ENCODE measurements at regions of chr4 and their contacts with region 1.

Region 1: GRCh38 chr4:183471946-183472708 is 27.7 kb downstream of the CDKN2AIP start:
- DNase-seq: peak; percentile 50
- H3K4me3 ChIP-seq: no peak overlapping the region
- H3K27ac ChIP-seq: no peak overlapping the region
- H3K4me1 ChIP-seq: peaks cover 33% of the 10 kb centered on the region
- H3K27me3 ChIP-seq: no peaks in the 10 kb centered on the region
- CTCF ChIP-seq: peak; percentile 73 to 85

Region 2: DNA sequence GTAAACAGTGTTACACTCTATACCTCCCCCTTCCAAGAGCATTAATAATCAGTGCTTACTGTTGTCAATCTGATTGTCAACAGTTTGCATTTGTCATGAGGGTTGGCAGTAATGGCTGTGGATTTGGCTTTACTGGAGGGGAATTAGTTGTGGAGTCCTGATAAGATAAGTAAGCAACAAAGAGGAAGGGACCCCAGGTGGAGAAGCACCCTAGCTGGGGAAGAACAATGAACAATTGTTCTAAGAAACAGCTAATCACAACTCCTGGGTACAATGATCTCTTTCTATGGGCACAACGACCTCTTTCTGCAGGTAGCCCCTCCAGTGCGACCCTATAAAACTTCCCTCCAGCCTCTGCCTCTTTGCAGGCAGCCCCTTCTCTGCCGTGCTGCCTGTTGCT is 80.9 kb before region 1 on chr4:
- CTCF ChIA-PET with region 1: no interaction called
- dilution Hi-C with region 1: no loop called
- in situ Hi-C with region 1: no loop called
- intact Hi-C with region 1: no loop called
- DNase-seq: no peak
- H3K4me3 ChIP-seq: no peak overlapping the region
- H3K27ac ChIP-seq: no peak overlapping the region
- H3K4me1 ChIP-seq: no peaks in the 10 kb centered on the region
- H3K27me3 ChIP-seq: no peaks in the 10 kb centered on the region
- CTCF ChIP-seq: no peak

Region 3: DNA sequence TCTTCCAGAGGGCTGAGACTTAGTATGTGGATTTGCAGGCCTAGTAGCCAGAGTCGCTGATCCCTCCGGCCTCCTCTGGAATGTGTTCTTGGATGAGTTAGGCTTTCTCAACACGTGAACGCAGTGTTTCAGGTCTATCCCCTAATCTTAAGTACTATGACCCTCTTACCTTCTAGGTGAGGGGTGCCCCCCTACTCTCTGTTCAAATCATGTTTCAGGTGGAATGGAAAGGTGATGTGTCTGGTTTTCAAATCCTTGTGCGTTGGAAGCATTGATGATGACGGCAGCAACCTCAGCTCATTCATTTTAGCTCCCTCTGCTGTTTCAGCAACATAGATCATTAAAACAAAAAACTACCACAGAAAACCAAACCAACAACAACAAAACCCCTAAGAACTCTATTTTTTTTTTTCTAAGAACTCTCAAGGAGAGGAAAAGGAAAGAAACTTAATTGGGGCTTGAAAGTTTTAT is 130.5 kb after region 1 on chr4:
- CTCF ChIA-PET with region 1: interaction called, 4 read pairs
- dilution Hi-C with region 1: no loop called
- in situ Hi-C with region 1: loop called in 1 of 2 experiments (anchors 10 kb)
- intact Hi-C with region 1: loop called (anchors 1 kb)
- DNase-seq: peak; percentile 12
- H3K4me3 ChIP-seq: no peak overlapping the region
- H3K27ac ChIP-seq: no peak overlapping the region
- H3K4me1 ChIP-seq: no peaks in the 10 kb centered on the region
- H3K27me3 ChIP-seq: no peaks in the 10 kb centered on the region
- CTCF ChIP-seq: peak in 1 of 2 donors; percentile 46

Region 4: GRCh38 chr4:183659029-183659871 is 187.1 kb after region 1 on chr4 and contains the starts of genes RWDD4 and TRAPPC11:
- CTCF ChIA-PET with region 1: no interaction called
- dilution Hi-C with region 1: no loop called
- in situ Hi-C with region 1: no loop called
- intact Hi-C with region 1: loop called (anchors 1 kb)
- DNase-seq: peak; percentile 99
- H3K4me3 ChIP-seq: peak within 1 kb of the TSS; percentile 74 to 95 (median 81)
- H3K27ac ChIP-seq: peak within 1 kb of the TSS; percentile 80
- H3K4me1 ChIP-seq: peaks cover 6% of the 10 kb centered on the region
- H3K27me3 ChIP-seq: no peaks in the 10 kb centered on the region
- CTCF ChIP-seq: peak in 1 of 2 donors; percentile 28
- total RNA-seq, gene RWDD4: 23.3 to 24.0 TPM
- total RNA-seq, gene TRAPPC11: 33.3 to 42.3 TPM

Region 5: GRCh38 chr4:183840311-183840710 is 368.2 kb after region 1 on chr4:
- CTCF ChIA-PET with region 1: no interaction called
- dilution Hi-C with region 1: no loop called
- in situ Hi-C with region 1: no loop called
- intact Hi-C with region 1: loop called (anchors 5 kb)
- DNase-seq: peak; percentile 46
- H3K4me3 ChIP-seq: no peak overlapping the region
- H3K27ac ChIP-seq: no peak overlapping the region
- H3K4me1 ChIP-seq: no peaks in the 10 kb centered on the region
- H3K27me3 ChIP-seq: peaks cover 3% of the 10 kb centered on the region
- CTCF ChIP-seq: peak; percentile 85 to 90